ENCODE measurements at regions of chr1 and their contacts with region 1.

Region 1: DNA sequence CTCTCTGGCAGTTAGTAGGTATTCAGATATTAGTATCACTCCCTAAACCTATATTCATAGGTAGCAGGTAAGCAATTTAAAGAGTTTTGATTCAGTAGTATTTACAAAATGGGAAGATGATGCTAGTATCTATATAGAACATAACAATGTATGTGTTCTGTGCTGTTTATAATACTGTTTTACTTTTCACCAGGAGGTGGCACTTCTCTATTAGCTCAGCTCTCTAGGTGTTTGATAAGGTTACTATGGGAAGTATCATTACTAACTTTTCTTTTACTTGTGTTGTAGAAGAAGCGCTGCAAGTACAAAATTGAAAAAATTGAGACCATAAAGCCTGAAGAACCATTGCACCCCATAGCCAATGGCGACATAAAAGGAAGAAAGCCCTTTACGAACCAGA is 49.4 kb upstream of the FASLG start:
- DNase-seq: no peak
- ATAC-seq: peak; percentile 73
- H3K4me3 Mint-ChIP-seq: no peak overlapping the region
- H3K27ac Mint-ChIP-seq: no peak overlapping the region
- H3K4me1 Mint-ChIP-seq: peaks cover under 1% of the 10 kb centered on the region
- H3K27me3 Mint-ChIP-seq: no peaks in the 10 kb centered on the region
- CTCF ChIP-seq: peak; percentile 51

Region 2: GRCh38 chr1:172588296-172589291 is 20.9 kb before region 1 on chr1:
- CTCF ChIA-PET with region 1: interaction called, 17 read pairs
- POLR2A ChIA-PET with region 1: no interaction called
- intact Hi-C with region 1: no loop called
- DNase-seq: peak; percentile 46
- ATAC-seq: peak; percentile 90
- H3K4me3 Mint-ChIP-seq: no peak overlapping the region
- H3K27ac Mint-ChIP-seq: peak overlapping the region; percentile 86
- H3K4me1 Mint-ChIP-seq: peaks cover 28% of the 10 kb centered on the region
- H3K27me3 Mint-ChIP-seq: no peaks in the 10 kb centered on the region
- CTCF ChIP-seq: no peak

Region 3: GRCh38 chr1:172630056-172630818 is 20.7 kb after region 1 on chr1:
- CTCF ChIA-PET with region 1: interaction called, 15 read pairs
- POLR2A ChIA-PET with region 1: interaction called, 3 read pairs
- intact Hi-C with region 1: no loop called
- DNase-seq: no peak
- ATAC-seq: no peak
- H3K4me3 Mint-ChIP-seq: no peak overlapping the region
- H3K27ac Mint-ChIP-seq: no peak overlapping the region
- H3K4me1 Mint-ChIP-seq: peaks cover 47% of the 10 kb centered on the region
- H3K27me3 Mint-ChIP-seq: peaks cover 5% of the 10 kb centered on the region
- CTCF ChIP-seq: no peak

Region 4: DNA sequence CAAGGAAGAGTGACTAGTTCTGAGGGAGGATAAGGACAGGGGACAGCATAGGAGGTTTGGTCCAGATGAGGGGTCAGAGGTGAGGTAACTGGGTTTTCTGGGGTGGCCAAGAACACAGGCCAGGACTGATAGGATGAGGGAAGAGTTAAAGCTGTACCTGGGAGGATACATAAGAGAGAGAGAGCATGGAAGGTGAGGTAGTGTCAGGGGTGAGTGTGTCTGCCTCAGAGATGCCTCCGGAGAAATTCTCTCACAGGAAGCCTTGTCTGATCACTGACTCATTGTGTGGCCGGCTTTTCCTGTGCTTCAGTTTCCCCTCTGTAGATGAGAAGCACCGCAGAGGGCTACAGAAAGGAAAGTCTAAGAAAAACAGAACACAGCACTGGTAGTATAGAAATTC is 89.6 kb after region 1 on chr1:
- CTCF ChIA-PET with region 1: interaction called, 10 read pairs
- POLR2A ChIA-PET with region 1: no interaction called
- intact Hi-C with region 1: no loop called
- DNase-seq: peak; percentile 87
- ATAC-seq: peak; percentile 80
- H3K4me3 Mint-ChIP-seq: peak overlapping the region; percentile 50
- H3K27ac Mint-ChIP-seq: peak overlapping the region; percentile 95
- H3K4me1 Mint-ChIP-seq: peaks cover 54% of the 10 kb centered on the region
- H3K27me3 Mint-ChIP-seq: no peaks in the 10 kb centered on the region
- CTCF ChIP-seq: no peak

Region 5: DNA sequence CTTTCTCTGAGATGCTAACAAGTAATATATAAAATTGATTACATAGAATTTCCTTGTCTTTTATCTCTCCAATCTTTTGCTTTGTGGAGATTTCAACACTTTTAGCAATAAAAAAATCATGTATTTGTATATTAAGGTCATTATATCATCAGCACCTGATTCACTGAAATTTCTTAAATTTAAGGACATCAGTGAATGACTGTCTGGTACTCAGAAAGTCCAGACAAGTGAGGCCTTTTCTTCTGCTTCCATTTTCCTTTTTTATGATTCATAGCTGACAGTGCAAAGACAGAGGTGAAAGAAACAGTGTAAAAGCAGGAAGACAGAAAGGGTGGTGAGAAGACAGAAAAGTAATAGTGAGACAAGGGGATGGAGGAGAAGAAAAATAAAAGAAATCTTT is 103.9 kb after region 1 on chr1:
- CTCF ChIA-PET with region 1: interaction called, 138 read pairs
- POLR2A ChIA-PET with region 1: interaction called, 5 read pairs
- intact Hi-C with region 1: loop called (anchors 2 kb)
- DNase-seq: no peak
- ATAC-seq: no peak
- H3K4me3 Mint-ChIP-seq: no peak overlapping the region
- H3K27ac Mint-ChIP-seq: no peak overlapping the region
- H3K4me1 Mint-ChIP-seq: peaks cover 37% of the 10 kb centered on the region
- H3K27me3 Mint-ChIP-seq: peaks cover 2% of the 10 kb centered on the region
- CTCF ChIP-seq: no peak

Measured in activated CD8-positive, alpha-beta T cell treated with anti-CD3 and anti-CD28 coated beads for 36 hours (primary cell).